AG04449 (cell line): ENCODE measurements at regions of chr20 and their contacts with region 1.

Region 1: GRCh38 chr20:44166477-44166876 is 20.5 kb downstream of the JPH2 start:
- DNase-seq: no peak
- H3K4me3 ChIP-seq: no peak overlapping the region
- CTCF ChIP-seq: no peak

Region 2: DNA sequence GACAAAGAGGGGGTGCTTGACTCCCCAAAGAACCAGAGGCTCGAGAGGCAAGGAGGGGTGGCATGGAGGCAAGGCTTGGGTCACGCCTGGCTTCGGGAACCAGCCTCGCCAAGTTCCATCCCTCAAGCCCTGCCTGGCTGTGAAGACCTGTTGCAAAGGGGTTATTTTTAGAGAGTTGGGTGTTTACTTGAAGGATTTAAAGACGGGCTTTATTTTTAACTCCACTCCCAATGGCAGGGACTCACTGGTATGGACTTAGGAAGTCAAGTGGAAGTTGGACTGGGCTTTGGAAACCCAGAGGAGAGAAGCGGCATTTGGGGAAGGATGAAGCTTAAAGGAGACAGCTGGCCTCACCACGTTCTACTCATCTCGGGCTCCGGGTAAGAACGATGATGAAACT is 22.5 kb before region 1 on chr20:
- CTCF ChIA-PET with region 1: no interaction called
- POLR2A ChIA-PET with region 1: no interaction called
- DNase-seq: no peak
- H3K4me3 ChIP-seq: no peak overlapping the region
- CTCF ChIP-seq: no peak

Region 3: GRCh38 chr20:44180814-44181213 is 14.3 kb after region 1 on chr20:
- CTCF ChIA-PET with region 1: interaction called, 4 read pairs
- POLR2A ChIA-PET with region 1: interaction called, 10 read pairs
- DNase-seq: no peak
- H3K4me3 ChIP-seq: no peak overlapping the region
- CTCF ChIP-seq: no peak

Region 4: DNA sequence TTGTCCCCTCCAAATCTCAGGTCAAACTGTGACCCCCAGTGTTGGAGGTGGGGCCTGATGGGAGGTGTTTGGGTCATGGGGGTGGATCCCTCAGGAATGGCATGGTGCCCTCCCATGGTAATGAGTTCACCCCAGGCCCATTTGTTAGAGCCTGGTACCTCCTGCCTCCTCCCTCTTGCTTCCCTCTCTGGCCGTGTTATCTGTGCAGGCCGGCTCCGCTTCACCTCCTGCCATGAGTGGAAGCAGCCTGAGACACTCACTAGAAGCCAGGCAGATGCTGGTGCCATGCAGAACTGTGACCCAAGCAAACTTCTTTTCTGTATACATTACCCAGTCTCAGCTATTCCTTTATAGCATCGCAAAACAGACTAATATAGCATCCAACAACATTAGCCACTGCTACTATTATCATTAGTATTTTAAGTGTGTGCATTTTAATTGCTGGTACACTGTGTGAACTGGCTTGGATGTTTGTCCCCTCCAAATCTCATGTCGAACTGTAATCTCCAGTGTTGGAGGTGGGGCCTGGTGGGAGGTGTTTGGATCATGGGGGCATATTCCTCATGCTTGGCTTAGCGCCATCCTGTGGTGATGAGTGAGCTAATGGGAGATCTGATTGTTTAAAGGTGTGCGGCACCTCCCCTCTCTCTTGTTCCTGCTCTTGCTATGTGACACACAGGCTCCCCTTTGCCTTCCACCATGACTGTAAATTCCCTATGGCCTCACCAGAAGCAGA is 56.3 kb after region 1 on chr20:
- CTCF ChIA-PET with region 1: no interaction called
- POLR2A ChIA-PET with region 1: no interaction called
- DNase-seq: no peak
- H3K4me3 ChIP-seq: no peak overlapping the region
- CTCF ChIP-seq: no peak